ENCODE measurements at regions of chr4 and their contacts with region 1.

Region 1: DNA sequence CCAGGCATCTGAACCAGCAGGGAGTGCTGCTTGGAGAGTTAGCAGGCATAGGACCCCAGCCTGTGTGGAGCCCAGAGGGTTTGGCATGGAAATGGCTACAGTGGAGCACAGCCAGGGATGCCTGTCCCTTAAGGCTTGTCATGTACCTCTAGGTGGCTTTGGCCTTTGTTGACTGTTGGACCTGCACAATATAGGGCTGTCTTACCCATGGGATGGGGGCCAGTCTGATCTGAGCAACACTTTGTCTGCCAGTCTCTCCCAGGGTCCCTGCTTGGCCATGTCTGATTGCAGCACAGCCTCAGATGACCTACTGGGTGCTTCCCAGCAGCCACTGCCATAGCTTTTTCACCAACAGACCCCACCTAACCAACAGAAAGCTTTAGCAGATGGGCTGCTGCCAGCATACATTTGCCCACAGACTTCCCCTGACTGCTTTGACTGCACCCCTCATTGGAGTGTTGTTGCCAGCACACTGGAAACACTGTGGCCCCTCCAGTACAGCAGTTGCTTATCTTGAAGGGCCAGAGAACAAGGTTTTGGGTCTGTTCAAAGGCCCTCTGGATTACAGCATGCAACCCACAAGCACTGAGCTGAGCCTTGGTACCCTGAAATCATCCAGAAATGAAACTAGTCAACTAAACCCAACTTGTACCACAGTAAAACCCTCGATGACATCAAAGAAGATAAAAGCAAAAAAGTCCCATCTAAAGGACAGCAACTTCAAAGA is 22.1 kb downstream of the ANAPC10 start:
- DNase-seq: no peak
- H3K4me3 Mint-ChIP-seq: peak overlapping the region; percentile 6
- H3K27ac Mint-ChIP-seq: peak overlapping the region; percentile 40
- H3K4me1 Mint-ChIP-seq: peaks cover 34% of the 10 kb centered on the region
- H3K27me3 Mint-ChIP-seq: no peaks in the 10 kb centered on the region

Region 2: DNA sequence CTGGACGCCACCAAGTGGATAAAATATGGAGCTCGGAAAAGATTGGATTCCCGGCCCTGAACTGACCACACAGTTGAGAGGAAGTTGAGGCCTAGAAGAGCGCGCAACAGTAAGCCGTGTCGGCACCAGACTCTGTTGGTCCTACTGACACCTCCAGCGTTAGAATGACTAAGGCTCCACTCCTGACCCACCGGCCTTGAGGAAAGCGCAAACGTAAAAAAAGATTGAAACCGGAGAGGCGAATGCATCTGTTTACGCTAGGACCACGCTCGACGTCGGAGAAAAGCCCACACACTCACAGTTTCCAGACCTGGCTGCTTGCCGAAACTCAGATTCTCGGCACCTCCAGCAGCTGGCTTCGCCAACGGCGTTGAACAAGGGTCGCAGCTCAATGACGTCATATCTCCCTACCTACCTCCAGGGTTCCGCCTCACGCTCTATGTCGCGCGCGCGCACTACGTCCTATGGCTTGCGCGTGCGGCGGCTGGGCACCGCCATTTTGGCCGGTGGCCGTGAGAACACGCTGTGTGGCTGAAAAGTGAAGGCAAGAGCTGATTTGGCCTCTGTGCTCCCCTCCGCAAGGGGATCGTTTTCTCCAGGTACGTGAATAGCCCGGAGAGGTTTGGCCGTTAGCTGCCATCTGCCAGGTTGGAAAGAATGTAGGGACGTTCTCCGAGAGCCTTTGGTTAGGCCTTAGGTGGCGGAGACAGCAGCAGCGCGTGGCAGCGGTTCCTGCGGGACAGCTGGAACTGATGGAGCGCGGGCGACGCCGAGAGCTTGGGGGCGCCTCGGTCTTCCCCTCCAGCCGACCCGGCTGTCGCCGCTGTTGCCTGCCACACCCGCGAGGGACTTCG is 22.1 kb after region 1 on chr4 and contains the starts of genes ABCE1 and ANAPC10:
- intact Hi-C with region 1: loop called (anchors 1 kb)
- DNase-seq: peak; percentile 93
- H3K4me3 Mint-ChIP-seq: peak within 1 kb of the TSS; percentile 95
- H3K27ac Mint-ChIP-seq: peak within 1 kb of the TSS; percentile 99
- H3K4me1 Mint-ChIP-seq: peaks cover 25% of the 10 kb centered on the region
- H3K27me3 Mint-ChIP-seq: no peaks in the 10 kb centered on the region
- total RNA-seq, gene ABCE1: 162 and 173 TPM in 2 replicates
- total RNA-seq, gene ANAPC10: 28.0 and 29.4 TPM in 2 replicates

Region 3: GRCh38 chr4:145171911-145172310 is 96.0 kb after region 1 on chr4:
- intact Hi-C with region 1: no loop called
- DNase-seq: no peak
- H3K4me3 Mint-ChIP-seq: no peak overlapping the region
- H3K27ac Mint-ChIP-seq: no peak overlapping the region
- H3K4me1 Mint-ChIP-seq: peaks cover 39% of the 10 kb centered on the region
- H3K27me3 Mint-ChIP-seq: no peaks in the 10 kb centered on the region

Region 4: DNA sequence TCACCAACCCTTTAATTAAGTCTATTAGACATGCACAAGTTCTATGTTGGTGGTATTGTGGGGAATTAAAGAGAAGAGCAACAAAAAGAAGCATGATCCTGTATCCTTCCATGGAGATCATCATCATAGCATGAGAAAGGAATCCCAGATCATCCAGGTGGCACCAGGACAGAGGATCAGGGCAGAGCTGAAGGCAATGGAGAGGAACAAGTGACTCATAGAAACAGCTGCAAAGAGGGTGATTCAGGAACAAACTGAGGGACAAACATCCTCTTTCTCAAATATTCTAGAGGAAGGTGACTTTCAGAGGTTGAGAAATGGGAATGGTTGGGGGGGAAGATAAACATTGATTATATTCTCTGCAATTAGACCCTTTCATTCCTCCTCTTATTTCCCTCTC is 210.0 kb after region 1 on chr4:
- intact Hi-C with region 1: no loop called
- DNase-seq: no peak
- H3K4me3 Mint-ChIP-seq: no peak overlapping the region
- H3K27ac Mint-ChIP-seq: no peak overlapping the region
- H3K4me1 Mint-ChIP-seq: no peaks in the 10 kb centered on the region
- H3K27me3 Mint-ChIP-seq: peaks cover 11% of the 10 kb centered on the region

Measured in activated T-helper 2 cell treated with anti-CD3 and anti-CD28 coated beads, Interferon-gamma antibody, Interleukin-2, Interleukin-4, amounts not matched to agents 10 μg/mL and 5 μg/mL and 100 μg/mL, durations not matched to agents 14 hours and 24 hours and 36 hours (primary cell).